ENCODE measurements at regions of chr11 and their contacts with region 1.

Region 1: DNA sequence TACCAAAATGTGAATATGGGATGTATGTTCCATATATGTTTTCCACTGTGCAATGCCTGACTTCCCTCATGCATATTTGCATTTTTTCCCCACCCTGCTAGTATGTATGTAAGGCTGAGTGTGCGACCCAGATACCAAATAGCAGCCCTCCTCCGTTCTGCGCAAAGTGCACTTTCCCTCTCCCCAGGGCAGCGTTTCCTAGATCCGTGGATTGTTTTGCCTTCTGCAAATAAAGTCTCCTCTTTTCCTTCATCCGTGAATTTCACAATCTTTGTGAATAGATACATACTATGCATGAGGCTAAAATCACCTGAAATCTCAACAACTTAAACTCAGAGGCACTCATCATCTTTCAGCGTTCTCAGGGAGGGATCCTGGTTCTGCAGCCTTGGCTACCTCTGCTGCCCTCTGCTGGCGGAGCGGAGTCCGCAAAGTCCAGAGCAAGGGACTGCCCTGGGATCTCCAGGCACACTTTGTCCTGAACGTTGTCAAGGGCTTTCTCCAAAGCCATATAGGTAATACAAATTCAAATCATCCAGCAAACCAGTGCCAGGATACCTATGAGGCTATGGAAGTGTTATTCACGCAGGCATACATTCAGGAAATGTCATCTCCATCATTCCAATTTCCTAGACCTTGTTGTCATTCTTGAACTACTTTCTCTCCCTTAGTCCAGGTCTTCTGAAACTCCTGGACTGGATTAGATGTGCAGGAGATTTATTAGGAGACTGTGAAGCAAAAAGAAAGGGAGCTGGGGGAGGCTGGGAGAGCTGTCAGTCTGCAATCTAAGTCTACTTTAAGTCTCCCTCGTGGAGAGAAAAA is 53.1 kb downstream of the CNTF start:
- DNase-seq: peak; percentile 49
- H3K4me3 Mint-ChIP-seq: no peak overlapping the region
- H3K27ac Mint-ChIP-seq: no peak overlapping the region
- H3K4me1 Mint-ChIP-seq: no peaks in the 10 kb centered on the region
- H3K27me3 Mint-ChIP-seq: no peaks in the 10 kb centered on the region

Region 2: GRCh38 chr11:58546841-58547240 is 128.7 kb before region 1 on chr11:
- intact Hi-C with region 1: no loop called
- DNase-seq: no peak
- H3K4me3 Mint-ChIP-seq: no peak overlapping the region
- H3K27ac Mint-ChIP-seq: no peak overlapping the region
- H3K4me1 Mint-ChIP-seq: peaks cover 10% of the 10 kb centered on the region
- H3K27me3 Mint-ChIP-seq: no peaks in the 10 kb centered on the region

Region 3: GRCh38 chr11:58567889-58568512 is 107.5 kb before region 1 on chr11:
- intact Hi-C with region 1: loop called (anchors 2 kb)
- DNase-seq: peak; percentile 66
- H3K4me3 Mint-ChIP-seq: peak overlapping the region; percentile 28
- H3K27ac Mint-ChIP-seq: peak overlapping the region; percentile 74
- H3K4me1 Mint-ChIP-seq: peaks cover 46% of the 10 kb centered on the region
- H3K27me3 Mint-ChIP-seq: no peaks in the 10 kb centered on the region